Pancreas (tissue), 10 donors: ENCODE measurements at regions of chr12 and their contacts with region 1.

Region 1: GRCh38 chr12:8890313-8891085 is 23.8 kb upstream of the PHC1 start:
- DNase-seq: peak in 5 of 6 donors; percentile 13 to 66 (median 30)
- ATAC-seq: peak; percentile 67 to 97 (median 90)
- H3K4me3 ChIP-seq: peak overlapping the region in 3 of 4 donors; percentile 14 to 46 (median 22)
- H3K27ac ChIP-seq: no peak overlapping the region
- H3K4me1 ChIP-seq: peaks cover 0 to 3% (median 0%) of the 10 kb centered on the region in 3 donors
- H3K27me3 ChIP-seq: no peaks in the 10 kb centered on the region
- CTCF ChIP-seq: peak; percentile 66 to 84 (median 76)

Region 2: GRCh38 chr12:8687846-8688601 is 202.5 kb before region 1 on chr12:
- intact Hi-C with region 1: loop called in 1 of 3 experiments (anchors 10 kb)
- DNase-seq: peak in 1 of 6 donors; percentile 20
- ATAC-seq: peak; percentile 61 to 90 (median 82)
- H3K4me3 ChIP-seq: no peak overlapping the region
- H3K27ac ChIP-seq: peak overlapping the region in 1 of 4 donors; percentile 5
- H3K4me1 ChIP-seq: no peaks in the 10 kb centered on the region
- H3K27me3 ChIP-seq: no peaks in the 10 kb centered on the region
- CTCF ChIP-seq: no peak

Region 3: GRCh38 chr12:8844665-8845064 is 45.8 kb before region 1 on chr12:
- intact Hi-C with region 1: no loop called
- DNase-seq: peak; percentile 61 to 86 (median 76)
- ATAC-seq: peak; percentile 78 to 97 (median 92)
- H3K4me3 ChIP-seq: no peak overlapping the region
- H3K27ac ChIP-seq: no peak overlapping the region
- H3K4me1 ChIP-seq: peaks cover 0 to 6% (median 0%) of the 10 kb centered on the region in 3 donors
- H3K27me3 ChIP-seq: no peaks in the 10 kb centered on the region
- CTCF ChIP-seq: no peak